ENCODE measurements at regions of chr22 and their contacts with region 1.

Region 1: GRCh38 chr22:20418211-20418788 is 19.3 kb downstream of the SCARF2 start:
- DNase-seq: peak; percentile 52 to 85 (median 70)
- ATAC-seq: peak; percentile 79 to 85
- H3K4me3 Mint-ChIP-seq: peak overlapping the region; percentile 50 to 80 (median 66)
- H3K27ac Mint-ChIP-seq: peak overlapping the region in 3 of 10 donors; percentile 5 to 51 (median 51)
- H3K4me1 Mint-ChIP-seq: peaks cover 0 to 3% (median under 1%) of the 10 kb centered on the region in 4 donors
- H3K27me3 Mint-ChIP-seq: no peaks in the 10 kb centered on the region

Region 2: GRCh38 chr22:20405931-20406685 is 12.2 kb before region 1 on chr22:
- POLR2A ChIA-PET with region 1: no interaction called
- DNase-seq: no peak
- ATAC-seq: no peak
- H3K4me3 Mint-ChIP-seq: no peak overlapping the region
- H3K27ac Mint-ChIP-seq: no peak overlapping the region
- H3K4me1 Mint-ChIP-seq: peaks cover 7 to 15% (median 10%) of the 10 kb centered on the region in 4 donors
- H3K27me3 Mint-ChIP-seq: no peaks in the 10 kb centered on the region

Region 3: GRCh38 chr22:20430720-20431510 is 12.6 kb after region 1 on chr22:
- POLR2A ChIA-PET with region 1: interaction called, 14 read pairs
- DNase-seq: peak; percentile 36 to 73 (median 50)
- ATAC-seq: peak; percentile 63 to 70
- H3K4me3 Mint-ChIP-seq: peak overlapping the region; percentile 65 to 97 (median 86)
- H3K27ac Mint-ChIP-seq: no peak overlapping the region
- H3K4me1 Mint-ChIP-seq: peaks cover 16 to 42% (median 33%) of the 10 kb centered on the region in 4 donors
- H3K27me3 Mint-ChIP-seq: peaks cover 27 to 70% (median 39%) of the 10 kb centered on the region in 5 donors

Region 4: DNA sequence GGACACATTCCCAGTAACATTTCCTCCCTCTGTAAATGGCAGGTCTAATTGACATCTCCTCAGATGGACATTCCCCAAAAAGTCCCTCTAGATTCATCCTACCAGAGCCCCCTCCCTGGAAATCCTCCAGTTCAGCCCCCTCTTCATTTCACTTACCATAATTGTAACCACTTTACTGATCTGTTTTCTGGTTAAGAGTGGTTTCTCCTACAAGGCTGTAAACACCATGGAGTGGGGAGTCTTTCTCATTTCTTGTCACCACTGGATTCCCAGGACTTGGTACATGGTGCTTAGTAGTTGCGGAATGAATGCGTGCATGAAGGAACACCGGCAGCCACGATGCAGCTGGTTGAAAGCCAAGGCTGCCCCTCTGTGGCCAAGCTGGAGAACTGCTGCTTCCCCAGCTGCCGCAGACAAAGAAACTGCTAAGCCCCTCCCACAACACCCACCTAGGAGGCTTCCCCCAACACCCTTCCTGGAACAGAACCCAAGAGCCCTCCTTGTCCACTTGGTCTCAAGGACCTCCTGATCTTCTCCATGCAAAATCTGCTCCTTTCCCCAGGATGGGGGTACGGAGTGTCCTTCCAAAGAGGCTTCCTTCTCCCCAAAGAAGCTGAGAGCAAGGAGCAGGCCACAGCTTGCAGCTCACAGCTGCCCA is 37.9 kb after region 1 on chr22:
- POLR2A ChIA-PET with region 1: interaction called, 13 read pairs
- DNase-seq: peak; percentile 65 to 88 (median 76)
- ATAC-seq: peak; percentile 98 to 100
- H3K4me3 Mint-ChIP-seq: peak overlapping the region in 3 of 10 donors; percentile 30 to 51 (median 46)
- H3K27ac Mint-ChIP-seq: peak overlapping the region; percentile 21 to 90 (median 74)
- H3K4me1 Mint-ChIP-seq: peaks cover 22 to 44% (median 35%) of the 10 kb centered on the region in 4 donors
- H3K27me3 Mint-ChIP-seq: no peaks in the 10 kb centered on the region

Measured in naive thymus-derived CD8-positive, alpha-beta T cell (primary cell).